GM12878 (cell line): ENCODE measurements at regions of chr20 and their contacts with region 1.

Region 1: GRCh38 chr20:36050436-36051317 is 82.3 kb downstream of the CNBD2 start:
- DNase-seq: peak; percentile 61
- ATAC-seq: peak; percentile 97
- H3K4me3 ChIP-seq: peak overlapping the region; percentile 77
- H3K27ac ChIP-seq: peak overlapping the region; percentile 60
- H3K4me1 ChIP-seq: peaks cover 11% of the 10 kb centered on the region
- H3K27me3 ChIP-seq: no peaks in the 10 kb centered on the region
- CTCF ChIP-seq: no peak
- EP300 ChIP-seq: no peak
- POLR2A ChIP-seq: peak; percentile 96
- RAD21 ChIP-seq: no peak

Region 2: GRCh38 chr20:36040571-36040970 is 10.1 kb before region 1 on chr20:
- CTCF ChIA-PET with region 1: no interaction called
- POLR2A ChIA-PET with region 1: interaction called, 3 read pairs
- RAD21 ChIA-PET with region 1: no interaction called
- SMC1A ChIA-PET with region 1: interaction called, 13 read pairs
- in situ Hi-C with region 1: no loop called
- intact Hi-C with region 1: no loop called
- DNase-seq: no peak
- ATAC-seq: peak; percentile 79
- H3K4me3 ChIP-seq: no peak overlapping the region
- H3K27ac ChIP-seq: no peak overlapping the region
- H3K4me1 ChIP-seq: no peaks in the 10 kb centered on the region
- H3K27me3 ChIP-seq: no peaks in the 10 kb centered on the region
- CTCF ChIP-seq: no peak
- EP300 ChIP-seq: peak in 1 of 2 experiments; percentile 83; a peak in 2 of 4 replicates
- POLR2A ChIP-seq: no peak
- RAD21 ChIP-seq: no peak

Region 3: GRCh38 chr20:36135159-36135558 is 84.5 kb after region 1 on chr20:
- CTCF ChIA-PET with region 1: interaction called, 3 read pairs
- POLR2A ChIA-PET with region 1: no interaction called
- RAD21 ChIA-PET with region 1: interaction called, 4 read pairs
- SMC1A ChIA-PET with region 1: interaction called, 5 read pairs
- in situ Hi-C with region 1: no loop called
- intact Hi-C with region 1: loop called (anchors 5 kb)
- DNase-seq: no peak
- ATAC-seq: no peak
- H3K4me3 ChIP-seq: no peak overlapping the region
- H3K27ac ChIP-seq: no peak overlapping the region
- H3K4me1 ChIP-seq: no peaks in the 10 kb centered on the region
- H3K27me3 ChIP-seq: no peaks in the 10 kb centered on the region
- CTCF ChIP-seq: no peak
- EP300 ChIP-seq: no peak
- POLR2A ChIP-seq: no peak
- RAD21 ChIP-seq: no peak